ENCODE measurements at regions of chr17 and their contacts with region 1.

Region 1: DNA sequence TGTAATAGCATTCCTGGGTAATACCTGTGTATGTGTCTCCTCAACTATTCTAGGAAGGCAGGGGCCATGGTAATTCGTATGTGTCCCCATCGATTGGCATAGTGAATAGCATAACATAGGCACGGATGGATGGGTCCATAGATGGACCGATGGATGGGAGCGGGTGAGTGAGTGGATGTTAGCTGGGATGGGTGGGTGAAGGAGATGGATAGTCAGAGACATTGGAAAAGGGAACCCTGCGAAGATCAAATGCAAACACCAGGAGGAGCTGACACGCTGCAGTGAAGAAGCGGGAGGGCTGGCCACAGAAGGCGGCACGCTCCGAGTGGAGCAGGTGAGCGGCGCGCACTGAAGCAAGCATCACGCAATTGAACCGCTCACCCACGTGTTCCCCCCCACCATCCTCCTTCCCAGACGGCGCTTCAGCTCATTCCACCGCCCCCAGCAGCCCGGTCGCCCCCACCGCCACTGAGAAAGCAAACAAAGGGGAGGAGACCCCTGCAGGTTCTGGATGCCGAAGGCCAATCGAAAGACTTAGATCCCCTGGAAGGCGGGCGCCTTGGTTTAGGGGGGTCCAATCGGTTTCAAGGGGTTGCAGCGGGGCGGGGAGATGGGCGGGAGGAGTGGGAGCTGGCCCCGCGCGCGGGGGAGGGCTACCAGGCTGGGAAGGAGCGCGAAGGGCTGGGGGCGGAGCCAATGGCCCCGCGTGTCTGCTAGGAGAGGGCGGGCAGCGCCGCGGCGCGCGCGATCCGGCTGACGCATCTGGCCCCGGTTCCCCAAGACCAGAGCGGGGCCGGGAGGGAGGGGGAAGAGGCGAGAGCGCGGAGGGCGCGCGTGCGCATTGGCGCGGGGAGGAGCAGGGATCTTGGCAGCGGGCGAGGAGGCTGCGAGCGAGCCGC is at the start of gene ARRB2:
- DNase-seq: peak; percentile 99
- ATAC-seq: peak; percentile 87
- H3K4me3 ChIP-seq: peak within 1 kb of the TSS; percentile 65 to 90 (median 75)
- H3K4me3 Mint-ChIP-seq: peak within 1 kb of the TSS; percentile 86
- H3K27ac ChIP-seq: peak within 1 kb of the TSS; percentile 60 to 74
- H3K27ac Mint-ChIP-seq: peak within 1 kb of the TSS; percentile 88
- H3K4me1 ChIP-seq: peaks cover 28 to 38% of the 10 kb centered on the region in 2 donors
- H3K4me1 Mint-ChIP-seq: peaks cover 43% of the 10 kb centered on the region
- H3K27me3 ChIP-seq: no peaks in the 10 kb centered on the region
- H3K27me3 Mint-ChIP-seq: no peaks in the 10 kb centered on the region
- CTCF ChIP-seq: peak; percentile 76
- total RNA-seq, gene ARRB2: 148 and 164 TPM in 2 replicates

Region 2: DNA sequence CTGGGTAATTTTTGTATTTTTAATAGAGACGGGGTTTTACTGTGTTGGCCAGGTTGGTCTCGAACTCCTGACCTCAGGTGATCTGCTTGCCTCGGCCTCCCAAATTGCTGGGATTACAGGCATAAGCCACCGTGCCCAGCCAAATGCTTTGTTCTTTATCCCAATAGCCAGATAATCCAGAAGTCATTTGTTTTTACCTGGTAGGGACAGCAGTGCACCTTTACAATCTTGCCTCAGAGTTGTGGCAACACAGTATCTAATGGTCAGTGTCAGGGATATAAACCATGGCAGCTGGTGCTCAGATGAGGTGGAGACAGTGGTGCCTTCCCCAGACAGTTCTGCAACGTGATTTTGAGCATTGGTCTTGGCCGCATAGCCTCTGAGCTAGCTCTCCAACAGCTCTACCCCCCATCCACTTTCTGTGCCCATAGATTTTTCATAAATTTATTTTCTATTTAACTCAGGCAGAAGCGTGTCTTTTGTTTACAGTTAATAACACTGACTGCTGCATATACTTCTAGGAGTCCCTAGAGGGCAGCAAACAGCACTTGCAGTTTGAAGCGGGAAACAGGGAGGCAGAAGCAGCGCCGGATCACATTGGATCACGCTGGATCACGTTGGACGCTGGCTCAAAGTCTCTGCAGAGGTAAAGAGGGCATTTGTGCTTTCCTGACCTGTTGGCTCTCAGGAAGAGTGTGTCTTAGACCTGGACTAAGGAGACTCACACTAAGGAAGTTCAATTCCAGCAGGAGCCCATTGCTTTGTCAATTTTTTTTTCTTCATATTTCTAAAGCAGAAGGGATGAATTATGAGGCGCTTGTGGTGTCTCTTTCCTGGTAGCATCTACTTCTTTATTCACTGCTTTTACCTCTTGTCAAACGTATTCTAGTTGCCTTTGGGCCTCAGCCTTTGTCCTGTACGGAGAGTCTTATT is 144.6 kb before region 1 on chr17:
- CTCF ChIA-PET with region 1: interaction called, 4 read pairs
- POLR2A ChIA-PET with region 1: no interaction called
- intact Hi-C with region 1: loop called (anchors 10 kb)
- DNase-seq: peak; percentile 71
- ATAC-seq: peak; percentile 74
- H3K4me3 ChIP-seq: no peak overlapping the region
- H3K4me3 Mint-ChIP-seq: peak overlapping the region; percentile 73
- H3K27ac ChIP-seq: no peak overlapping the region
- H3K27ac Mint-ChIP-seq: no peak overlapping the region
- H3K4me1 ChIP-seq: peaks cover 14 to 19% of the 10 kb centered on the region in 2 donors
- H3K4me1 Mint-ChIP-seq: peaks cover 25% of the 10 kb centered on the region
- H3K27me3 ChIP-seq: no peaks in the 10 kb centered on the region
- H3K27me3 Mint-ChIP-seq: no peaks in the 10 kb centered on the region
- CTCF ChIP-seq: peak; percentile 92

Region 3: DNA sequence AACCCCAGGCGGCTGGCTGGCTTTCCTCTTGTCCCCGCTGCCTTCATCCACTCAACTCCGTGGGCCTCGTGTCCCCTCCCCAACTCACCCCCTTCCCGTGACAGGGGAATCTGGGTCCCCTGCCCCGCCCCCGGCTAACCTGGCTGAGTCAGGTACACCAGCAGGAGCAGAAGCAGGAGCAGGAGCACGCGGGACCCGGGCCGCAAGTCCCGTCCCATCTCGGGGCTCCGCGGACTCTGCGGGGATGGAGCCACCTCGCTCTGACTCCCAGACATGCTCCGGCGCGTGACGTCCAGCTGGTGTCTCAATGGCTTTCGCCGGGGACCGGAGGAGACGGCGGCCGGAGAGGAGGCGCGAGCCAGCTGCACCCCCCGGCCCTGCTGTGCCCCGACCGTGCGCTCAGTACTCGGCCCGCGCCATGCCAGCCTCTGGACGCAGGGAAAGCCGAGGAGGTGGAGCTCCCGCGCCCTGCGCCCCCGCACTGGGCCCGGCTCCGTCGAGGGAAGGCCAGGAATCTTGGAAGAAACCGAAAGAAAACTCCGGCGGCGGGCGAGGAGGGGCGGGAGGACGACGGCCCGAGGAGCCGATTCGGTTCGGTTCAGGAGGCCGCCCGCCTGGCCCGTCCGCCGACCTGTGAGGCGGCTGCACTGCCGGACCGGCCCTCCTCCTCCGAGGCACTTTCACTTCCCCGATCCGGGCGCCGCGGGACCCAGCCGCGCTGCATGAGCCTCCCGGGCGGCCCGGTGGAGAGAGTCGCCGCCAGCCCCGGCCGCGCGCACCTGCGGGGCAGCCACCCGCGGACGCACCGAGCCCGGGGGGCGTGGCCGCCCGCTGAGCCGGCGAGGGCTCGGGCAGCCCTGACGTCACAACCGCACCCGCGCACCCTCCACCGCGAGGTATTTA is 29.3 kb after region 1 on chr17 and contains the starts of genes CXCL16 and ZMYND15:
- CTCF ChIA-PET with region 1: interaction called, 9 read pairs
- POLR2A ChIA-PET with region 1: no interaction called
- intact Hi-C with region 1: loop called (anchors 2 kb)
- DNase-seq: peak; percentile 88
- ATAC-seq: peak; percentile 86
- H3K4me3 ChIP-seq: peak within 1 kb of the TSS; percentile 38 to 82 (median 70)
- H3K4me3 Mint-ChIP-seq: peak within 1 kb of the TSS; percentile 93
- H3K27ac ChIP-seq: peak within 1 kb of the TSS; percentile 50 to 74
- H3K27ac Mint-ChIP-seq: peak within 1 kb of the TSS; percentile 94
- H3K4me1 ChIP-seq: peaks cover 23 to 31% of the 10 kb centered on the region in 2 donors
- H3K4me1 Mint-ChIP-seq: peaks cover 34% of the 10 kb centered on the region
- H3K27me3 ChIP-seq: peaks cover 0 to 35% (median 9%) of the 10 kb centered on the region in 4 experiments
- H3K27me3 Mint-ChIP-seq: no peaks in the 10 kb centered on the region
- CTCF ChIP-seq: no peak
- total RNA-seq, gene CXCL16: 19.3 and 22.0 TPM in 2 replicates
- total RNA-seq, gene ZMYND15: 2.1 and 2.5 TPM in 2 replicates

Region 4: GRCh38 chr17:4833178-4833940 is 123.3 kb after region 1 on chr17 and contains the start of gene MINK1:
- CTCF ChIA-PET with region 1: no interaction called
- POLR2A ChIA-PET with region 1: interaction called, 6 read pairs
- intact Hi-C with region 1: loop called (anchors 1 kb)
- DNase-seq: peak; percentile 97
- ATAC-seq: peak; percentile 93
- H3K4me3 ChIP-seq: peak within 1 kb of the TSS; percentile 68 to 86 (median 79)
- H3K4me3 Mint-ChIP-seq: peak within 1 kb of the TSS; percentile 99
- H3K27ac ChIP-seq: peak within 1 kb of the TSS; percentile 77 to 85
- H3K27ac Mint-ChIP-seq: peak within 1 kb of the TSS; percentile 99
- H3K4me1 ChIP-seq: peaks cover 21 to 26% of the 10 kb centered on the region in 2 donors
- H3K4me1 Mint-ChIP-seq: peaks cover 29% of the 10 kb centered on the region
- H3K27me3 ChIP-seq: no peaks in the 10 kb centered on the region
- H3K27me3 Mint-ChIP-seq: no peaks in the 10 kb centered on the region
- CTCF ChIP-seq: no peak
- total RNA-seq, gene MINK1: 108 and 109 TPM in 2 replicates

Region 5: GRCh38 chr17:4895657-4896331 is 185.8 kb after region 1 on chr17:
- CTCF ChIA-PET with region 1: interaction called, 20 read pairs
- POLR2A ChIA-PET with region 1: no interaction called
- intact Hi-C with region 1: no loop called
- DNase-seq: no peak
- ATAC-seq: no peak
- H3K4me3 ChIP-seq: no peak overlapping the region
- H3K4me3 Mint-ChIP-seq: no peak overlapping the region
- H3K27ac ChIP-seq: no peak overlapping the region
- H3K27ac Mint-ChIP-seq: no peak overlapping the region
- H3K4me1 ChIP-seq: peaks cover 21 to 22% of the 10 kb centered on the region in 2 donors
- H3K4me1 Mint-ChIP-seq: peaks cover 22% of the 10 kb centered on the region
- H3K27me3 ChIP-seq: peaks cover 0 to 21% (median 10%) of the 10 kb centered on the region in 4 experiments
- H3K27me3 Mint-ChIP-seq: no peaks in the 10 kb centered on the region
- CTCF ChIP-seq: no peak

Region 6: DNA sequence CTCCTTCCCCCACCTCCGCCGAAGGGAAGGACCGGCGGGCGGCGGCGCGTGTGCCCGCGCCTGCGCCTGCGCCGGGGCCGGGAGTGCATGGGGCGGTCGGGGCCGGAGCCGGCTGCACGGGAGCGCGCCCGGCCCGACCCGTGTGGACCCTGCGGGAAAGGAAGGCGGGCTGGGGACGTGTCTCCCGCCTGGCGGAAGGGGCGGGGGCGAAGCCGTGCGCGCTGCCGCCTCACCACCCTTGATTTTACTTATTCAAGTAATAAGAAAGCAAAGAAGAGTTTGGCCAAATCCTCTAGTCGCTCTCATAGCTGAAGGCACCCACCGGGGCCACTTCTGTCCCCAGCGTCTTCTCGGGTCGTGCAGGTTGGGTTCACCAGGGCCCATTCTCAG is 238.9 kb after region 1 on chr17:
- CTCF ChIA-PET with region 1: no interaction called
- POLR2A ChIA-PET with region 1: interaction called, 6 read pairs
- intact Hi-C with region 1: loop called (anchors 1 kb)
- DNase-seq: peak; percentile 90
- ATAC-seq: peak; percentile 50
- H3K4me3 ChIP-seq: peak overlapping the region; percentile 59 to 99 (median 96)
- H3K4me3 Mint-ChIP-seq: peak overlapping the region; percentile 98
- H3K27ac ChIP-seq: peak overlapping the region; percentile 73 to 93
- H3K27ac Mint-ChIP-seq: peak overlapping the region; percentile 99
- H3K4me1 ChIP-seq: peaks cover 37 to 45% of the 10 kb centered on the region in 2 donors
- H3K4me1 Mint-ChIP-seq: peaks cover 46% of the 10 kb centered on the region
- H3K27me3 ChIP-seq: no peaks in the 10 kb centered on the region
- H3K27me3 Mint-ChIP-seq: no peaks in the 10 kb centered on the region
- CTCF ChIP-seq: no peak

Measured in B cell (primary cell).